ENCODE measurements at regions of chr1 and their contacts with region 1.

Region 1: DNA sequence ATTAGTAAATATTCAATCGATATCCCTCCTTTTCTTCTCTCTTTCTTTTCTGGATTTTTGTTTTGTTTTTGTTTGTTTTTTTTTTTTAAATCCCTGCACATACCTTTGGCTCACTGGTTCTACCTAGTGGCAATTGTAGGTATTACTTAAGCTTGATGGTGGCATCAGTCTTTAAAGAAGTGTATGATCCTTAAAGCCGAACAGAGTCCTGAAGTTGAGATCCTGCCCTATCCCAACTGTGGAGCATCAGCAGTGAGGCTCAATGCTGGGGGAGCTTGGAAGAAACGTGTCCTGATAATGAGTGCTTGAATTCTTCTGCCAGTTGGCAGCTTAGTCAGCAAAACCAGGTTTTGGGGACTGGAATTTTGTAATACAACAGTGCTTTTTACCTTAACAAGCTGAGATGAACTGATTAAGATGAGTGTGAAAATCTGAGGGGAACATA is 60.8 kb downstream of the FASLG start:
- DNase-seq: peak; percentile 57
- H3K4me3 ChIP-seq: no peak overlapping the region
- H3K27ac ChIP-seq: no peak overlapping the region
- H3K4me1 ChIP-seq: peaks cover 6 to 7% of the 10 kb centered on the region in 2 experiments; a peak in 3 of 4 replicates
- H3K27me3 ChIP-seq: no peaks in the 10 kb centered on the region
- CTCF ChIP-seq: peak; percentile 86
- EP300 ChIP-seq: no peak
- RAD21 ChIP-seq: peak; percentile 80

Region 2: DNA sequence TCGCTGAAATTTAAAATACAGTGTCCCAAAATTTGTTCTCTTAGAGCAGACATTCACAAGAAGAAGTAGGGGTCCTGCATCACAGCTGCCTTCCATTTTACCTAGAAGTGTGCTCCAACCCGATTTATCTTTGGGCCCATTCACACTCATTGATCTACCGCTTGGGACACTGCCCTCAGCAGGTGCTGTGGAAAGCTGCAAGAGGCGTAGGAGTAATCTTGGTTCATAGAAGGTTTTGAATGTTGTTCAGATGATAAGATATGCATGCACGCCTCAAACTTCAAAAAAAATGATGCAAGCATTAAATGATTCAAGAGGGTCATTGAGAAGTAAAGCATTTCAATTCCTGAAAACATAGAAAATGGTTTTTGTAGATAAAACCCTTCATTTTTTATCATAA is 317.8 kb before region 1 on chr1:
- CTCF ChIA-PET with region 1: no interaction called
- POLR2A ChIA-PET with region 1: no interaction called
- DNase-seq: no peak
- H3K4me3 ChIP-seq: no peak overlapping the region
- H3K27ac ChIP-seq: no peak overlapping the region
- H3K4me1 ChIP-seq: peaks cover 8 to 24% of the 10 kb centered on the region in 2 experiments
- H3K27me3 ChIP-seq: no peaks in the 10 kb centered on the region
- CTCF ChIP-seq: peak; percentile 23
- EP300 ChIP-seq: no peak
- RAD21 ChIP-seq: peak; percentile 33; the same call in 1 of the 2 replicates

Region 3: GRCh38 chr1:172443626-172444453 is 275.9 kb before region 1 on chr1 and contains the start of gene PIGC:
- CTCF ChIA-PET with region 1: interaction called, 57 read pairs
- POLR2A ChIA-PET with region 1: no interaction called
- DNase-seq: peak; percentile 92
- H3K4me3 ChIP-seq: peak within 1 kb of the TSS; percentile 89 to 99
- H3K27ac ChIP-seq: peak within 1 kb of the TSS; percentile 45 to 73; a peak in 3 of 4 replicates
- H3K4me1 ChIP-seq: peaks cover 0 to 12% of the 10 kb centered on the region in 2 experiments; a peak in 3 of 4 replicates
- H3K27me3 ChIP-seq: no peaks in the 10 kb centered on the region
- CTCF ChIP-seq: peak; percentile 86
- EP300 ChIP-seq: no peak; a peak in 1 of 4 replicates
- RAD21 ChIP-seq: peak; percentile 72
- polyA plus RNA-seq, gene PIGC: 20.6 and 31.4 TPM in 2 replicates

Region 4: DNA sequence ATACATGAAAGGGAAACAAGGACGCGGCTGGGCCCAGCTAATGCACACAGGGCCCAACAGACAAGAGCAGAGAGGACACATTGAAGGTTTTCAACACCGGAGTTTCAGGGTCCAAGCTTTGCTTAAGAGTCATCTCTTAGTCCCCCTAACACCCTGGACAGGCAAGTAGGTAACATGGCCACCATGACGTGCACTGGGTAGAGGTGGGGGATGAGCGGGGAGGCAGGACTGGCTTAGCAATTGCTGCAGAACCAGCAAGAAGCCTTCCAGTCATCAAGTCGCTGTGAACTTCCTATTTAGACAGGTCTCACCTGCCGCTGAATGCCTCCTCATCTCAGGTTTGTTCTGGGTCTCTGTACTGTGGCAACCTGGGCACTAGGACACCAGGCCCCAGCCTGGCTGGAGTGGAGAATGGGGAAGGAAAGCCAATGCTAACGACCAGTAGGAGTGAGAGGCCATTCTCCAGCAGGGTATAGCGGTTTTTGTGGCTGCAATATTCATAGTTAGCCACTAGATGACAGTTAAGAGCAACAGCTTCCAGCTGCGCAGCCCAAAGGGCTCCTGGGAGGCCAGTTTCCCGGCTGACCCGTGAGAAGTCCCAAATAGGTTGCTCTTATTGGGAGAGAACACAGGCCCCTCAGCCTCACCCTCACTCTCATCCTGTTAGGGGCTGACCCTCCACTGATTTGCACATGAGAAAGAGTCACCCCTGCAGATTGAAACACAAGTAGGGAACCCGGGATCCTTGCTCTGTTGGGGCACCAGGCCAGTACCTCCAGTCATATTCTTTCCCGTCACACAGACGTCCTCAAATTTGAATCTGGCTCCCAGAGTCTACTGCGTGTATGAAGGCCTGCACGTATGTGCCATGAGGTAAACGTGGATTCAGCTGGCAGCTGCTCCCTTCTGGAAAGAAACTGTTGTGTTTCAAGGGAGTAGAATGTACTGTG is 269.9 kb before region 1 on chr1:
- CTCF ChIA-PET with region 1: interaction called, 57 read pairs
- POLR2A ChIA-PET with region 1: no interaction called
- DNase-seq: peak; percentile 71
- H3K4me3 ChIP-seq: no peak overlapping the region; a peak in 1 of 4 replicates
- H3K27ac ChIP-seq: no peak overlapping the region
- H3K4me1 ChIP-seq: peaks cover 0 to 12% of the 10 kb centered on the region in 2 experiments; a peak in 2 of 4 replicates
- H3K27me3 ChIP-seq: no peaks in the 10 kb centered on the region
- CTCF ChIP-seq: peak; percentile 72
- EP300 ChIP-seq: no peak
- RAD21 ChIP-seq: peak; percentile 89

Region 5: DNA sequence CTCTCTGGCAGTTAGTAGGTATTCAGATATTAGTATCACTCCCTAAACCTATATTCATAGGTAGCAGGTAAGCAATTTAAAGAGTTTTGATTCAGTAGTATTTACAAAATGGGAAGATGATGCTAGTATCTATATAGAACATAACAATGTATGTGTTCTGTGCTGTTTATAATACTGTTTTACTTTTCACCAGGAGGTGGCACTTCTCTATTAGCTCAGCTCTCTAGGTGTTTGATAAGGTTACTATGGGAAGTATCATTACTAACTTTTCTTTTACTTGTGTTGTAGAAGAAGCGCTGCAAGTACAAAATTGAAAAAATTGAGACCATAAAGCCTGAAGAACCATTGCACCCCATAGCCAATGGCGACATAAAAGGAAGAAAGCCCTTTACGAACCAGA is 110.2 kb before region 1 on chr1:
- CTCF ChIA-PET with region 1: interaction called, 20 read pairs
- POLR2A ChIA-PET with region 1: no interaction called
- DNase-seq: no peak
- H3K4me3 ChIP-seq: no peak overlapping the region
- H3K27ac ChIP-seq: no peak overlapping the region
- H3K4me1 ChIP-seq: no peaks in the 10 kb centered on the region; a peak in 2 of 4 replicates
- H3K27me3 ChIP-seq: no peaks in the 10 kb centered on the region
- CTCF ChIP-seq: peak; percentile 63
- EP300 ChIP-seq: no peak
- RAD21 ChIP-seq: peak; percentile 56

Measured in SK-N-SH (cell line).